Activated T-helper 2 cell treated with anti-CD3 and anti-CD28 coated beads, Interferon-gamma antibody, Interleukin-2, Interleukin-4, amounts not matched to agents 10 μg/mL and 5 μg/mL and 100 μg/mL, durations not matched to agents 14 hours and 24 hours and 36 hours (primary cell): ENCODE measurements at regions of chr3 and their contacts with region 1.

Region 1: DNA sequence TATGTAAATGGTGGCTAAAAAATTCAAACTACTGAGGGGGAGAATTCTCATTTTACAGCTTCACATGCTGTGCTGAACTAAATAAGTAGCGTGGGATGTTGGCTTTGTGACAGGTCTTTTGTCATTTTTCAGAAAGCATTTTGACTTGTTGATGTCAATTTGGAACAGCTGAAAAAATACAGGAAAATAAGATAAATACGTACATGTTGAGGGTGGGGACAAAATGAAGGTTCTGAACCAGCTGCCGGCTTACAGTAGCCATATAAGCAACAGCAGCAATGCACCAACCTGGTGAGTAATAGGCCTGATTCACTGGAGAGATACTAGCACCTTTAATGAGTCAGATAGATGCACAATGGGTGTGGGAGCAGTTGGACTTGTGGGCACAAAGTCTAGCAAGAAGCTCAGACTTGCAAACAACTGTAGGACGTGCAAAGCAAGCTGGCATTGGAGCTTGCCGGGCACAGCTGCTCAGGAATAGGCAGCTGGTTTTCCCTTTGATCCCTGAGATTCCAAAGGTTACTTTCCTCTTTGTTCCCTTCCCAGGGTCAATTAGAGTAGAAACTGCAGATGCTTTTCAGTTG is 12.9 kb downstream of the B3GNT5 start:
- DNase-seq: no peak
- H3K4me3 Mint-ChIP-seq: peak overlapping the region; percentile 43
- H3K27ac Mint-ChIP-seq: no peak overlapping the region
- H3K4me1 Mint-ChIP-seq: no peaks in the 10 kb centered on the region
- H3K27me3 Mint-ChIP-seq: no peaks in the 10 kb centered on the region

Region 2: GRCh38 chr3:183210839-183211341 is 55.0 kb before region 1 on chr3:
- intact Hi-C with region 1: loop called (anchors 2 kb)
- DNase-seq: no peak
- H3K4me3 Mint-ChIP-seq: no peak overlapping the region
- H3K27ac Mint-ChIP-seq: peak overlapping the region; percentile 87
- H3K4me1 Mint-ChIP-seq: peaks cover 35% of the 10 kb centered on the region
- H3K27me3 Mint-ChIP-seq: no peaks in the 10 kb centered on the region

Region 3: DNA sequence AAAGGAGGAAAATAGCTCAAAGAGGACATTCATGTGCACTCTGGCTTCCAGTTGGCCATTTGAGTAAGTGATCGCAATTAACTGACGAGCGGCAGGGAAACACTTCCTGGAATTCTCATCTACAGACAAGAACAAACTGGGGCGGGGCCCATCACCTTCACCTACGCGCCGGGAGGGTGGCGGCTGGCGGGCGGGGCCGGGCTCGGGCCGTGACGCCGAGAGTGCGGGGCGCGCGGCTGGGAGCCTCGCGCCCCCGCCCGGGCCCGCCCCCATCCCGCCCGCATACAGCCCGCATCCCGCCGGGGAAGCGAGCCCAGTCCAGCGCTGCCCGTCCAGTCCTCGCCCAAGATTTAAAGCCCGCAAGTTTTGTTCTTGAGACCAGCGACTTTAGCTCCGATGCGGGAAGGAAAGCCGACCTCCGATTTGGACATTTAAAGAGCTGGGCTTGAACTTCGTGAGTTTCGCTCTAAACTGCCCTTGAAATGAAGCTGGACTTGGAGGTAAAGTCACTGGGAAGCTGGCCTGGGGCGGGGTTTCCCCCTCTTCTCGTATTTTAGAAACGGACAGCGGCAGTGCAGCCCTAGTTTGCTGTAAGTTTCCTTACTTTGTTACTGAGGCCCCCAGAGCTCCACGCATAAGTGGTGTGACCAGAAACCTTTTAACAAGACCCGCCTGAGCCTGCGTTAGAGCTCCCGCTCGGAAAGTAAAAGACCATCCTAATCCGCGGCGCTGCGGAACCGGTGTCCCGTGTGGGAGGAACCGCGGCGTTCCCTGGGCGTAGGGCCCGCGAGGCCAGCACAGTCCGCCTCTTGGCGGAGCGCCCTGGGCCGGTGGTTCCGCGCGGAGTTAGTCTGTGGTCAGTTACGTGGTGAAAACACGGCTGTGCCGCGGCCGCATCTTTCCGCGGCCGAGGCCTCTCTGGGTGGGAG is 12.7 kb before region 1 on chr3 and contains the start of gene B3GNT5:
- intact Hi-C with region 1: loop called (anchors 1 kb)
- DNase-seq: no peak
- H3K4me3 Mint-ChIP-seq: peak within 1 kb of the TSS; percentile 85
- H3K27ac Mint-ChIP-seq: peak within 1 kb of the TSS; percentile 76
- H3K4me1 Mint-ChIP-seq: peaks cover 23% of the 10 kb centered on the region
- H3K27me3 Mint-ChIP-seq: no peaks in the 10 kb centered on the region
- total RNA-seq, gene B3GNT5: 41.0 and 41.7 TPM in 2 replicates

Region 4: DNA sequence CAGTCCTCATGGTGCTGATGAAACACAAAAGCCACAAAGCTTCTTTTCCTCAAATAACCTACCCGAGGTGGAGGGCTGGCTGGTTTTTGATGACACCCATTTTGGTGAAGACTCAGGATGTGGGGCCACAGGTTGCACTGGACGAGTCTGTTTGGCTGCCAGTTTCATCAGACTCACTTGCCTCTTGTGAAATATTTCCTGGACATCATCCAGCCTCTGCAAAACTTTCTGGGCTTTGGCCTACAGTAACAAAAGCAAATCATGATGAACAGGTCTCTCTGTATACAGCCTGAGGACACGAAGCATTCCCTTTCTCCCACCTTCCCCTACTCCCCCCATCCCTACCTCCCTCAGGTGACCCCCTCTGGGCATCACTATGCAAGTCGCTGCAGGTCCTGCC is 29.3 kb after region 1 on chr3:
- intact Hi-C with region 1: no loop called
- DNase-seq: no peak
- H3K4me3 Mint-ChIP-seq: no peak overlapping the region
- H3K27ac Mint-ChIP-seq: no peak overlapping the region
- H3K4me1 Mint-ChIP-seq: no peaks in the 10 kb centered on the region
- H3K27me3 Mint-ChIP-seq: no peaks in the 10 kb centered on the region

Region 5: GRCh38 chr3:183306798-183307671 is 41.1 kb after region 1 on chr3:
- intact Hi-C with region 1: loop called (anchors 1 kb)
- DNase-seq: peak; percentile 25
- H3K4me3 Mint-ChIP-seq: peak overlapping the region; percentile 2
- H3K27ac Mint-ChIP-seq: peak overlapping the region; percentile 81
- H3K4me1 Mint-ChIP-seq: peaks cover 29% of the 10 kb centered on the region
- H3K27me3 Mint-ChIP-seq: no peaks in the 10 kb centered on the region

Region 6: GRCh38 chr3:183435661-183436060 is 169.7 kb after region 1 on chr3:
- intact Hi-C with region 1: loop called (anchors 2 kb)
- DNase-seq: no peak
- H3K4me3 Mint-ChIP-seq: no peak overlapping the region
- H3K27ac Mint-ChIP-seq: peak overlapping the region; percentile 15
- H3K4me1 Mint-ChIP-seq: peaks cover 68% of the 10 kb centered on the region
- H3K27me3 Mint-ChIP-seq: peaks cover 4% of the 10 kb centered on the region